ENCODE measurements at regions of chr16 and their contacts with region 1.

Region 1: DNA sequence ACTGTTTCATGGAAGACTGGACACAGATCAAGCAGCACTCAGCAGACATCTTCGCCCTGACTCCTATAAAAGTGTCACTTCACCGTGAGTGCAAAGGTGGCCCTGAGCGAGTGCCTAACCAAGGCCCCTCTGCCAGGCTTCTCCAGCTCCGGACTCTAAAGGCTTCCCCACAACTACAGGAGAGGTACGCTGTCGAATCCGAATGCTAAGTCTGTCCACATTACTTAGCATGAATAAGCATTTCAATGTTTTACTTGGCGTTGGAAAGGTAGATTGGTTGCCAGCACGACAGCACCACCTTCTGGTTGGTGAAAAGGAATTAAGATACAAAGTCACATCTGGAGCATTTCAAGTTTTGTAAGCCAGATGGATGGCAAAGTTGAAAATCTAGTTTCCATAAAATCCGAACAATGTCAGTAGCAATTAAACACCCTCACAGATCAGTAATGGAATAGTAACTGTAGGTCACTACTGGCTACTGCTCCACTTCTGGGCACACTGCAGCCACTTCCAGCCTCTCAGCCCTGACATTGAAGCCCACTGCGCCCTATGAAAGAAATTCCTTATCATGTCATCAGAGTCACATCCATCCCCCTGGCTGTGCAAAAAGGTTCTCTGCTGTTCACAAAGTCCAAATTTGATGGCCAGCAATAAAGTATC is 100.9 kb downstream of the PARN start:
- DNase-seq: peak; percentile 81
- ATAC-seq: peak; percentile 91
- H3K4me3 ChIP-seq: no peak overlapping the region
- H3K27ac ChIP-seq: peak overlapping the region; percentile 45
- H3K4me1 ChIP-seq: peaks cover 9% of the 10 kb centered on the region; the same call in 1 of the 2 replicates
- H3K27me3 ChIP-seq: no peaks in the 10 kb centered on the region
- CTCF ChIP-seq: peak; percentile 66 to 94 (median 70); a peak in 5 of 6 replicates
- EP300 ChIP-seq: no peak
- POLR2A ChIP-seq: no peak
- RAD21 ChIP-seq: peak; percentile 99

Region 2: GRCh38 chr16:14249291-14250032 is 279.7 kb before region 1 on chr16:
- CTCF ChIA-PET with region 1: interaction called, 19 read pairs
- POLR2A ChIA-PET with region 1: no interaction called
- RAD21 ChIA-PET with region 1: interaction called, 6 read pairs
- SMC1A ChIA-PET with region 1: interaction called, 12 read pairs
- in situ Hi-C with region 1: no loop called
- intact Hi-C with region 1: loop called (anchors 2 kb)
- DNase-seq: peak; percentile 13
- ATAC-seq: peak; percentile 57; the same call in 2 of the 3 replicates
- H3K4me3 ChIP-seq: no peak overlapping the region
- H3K27ac ChIP-seq: no peak overlapping the region
- H3K4me1 ChIP-seq: no peaks in the 10 kb centered on the region
- H3K27me3 ChIP-seq: no peaks in the 10 kb centered on the region
- CTCF ChIP-seq: peak; percentile 85 to 91 (median 88)
- EP300 ChIP-seq: no peak
- POLR2A ChIP-seq: no peak
- RAD21 ChIP-seq: peak; percentile 88

Region 3: GRCh38 chr16:14285513-14286385 is 243.4 kb before region 1 on chr16:
- CTCF ChIA-PET with region 1: interaction called, 17 read pairs
- POLR2A ChIA-PET with region 1: no interaction called
- RAD21 ChIA-PET with region 1: interaction called, 7 read pairs
- SMC1A ChIA-PET with region 1: interaction called, 14 read pairs
- in situ Hi-C with region 1: loop called (anchors 5 kb)
- intact Hi-C with region 1: loop called (anchors 1 kb)
- DNase-seq: peak; percentile 87
- ATAC-seq: peak; percentile 89
- H3K4me3 ChIP-seq: peak overlapping the region; percentile 89
- H3K27ac ChIP-seq: peak overlapping the region; percentile 76
- H3K4me1 ChIP-seq: peaks cover 8% of the 10 kb centered on the region
- H3K27me3 ChIP-seq: no peaks in the 10 kb centered on the region
- CTCF ChIP-seq: no peak
- EP300 ChIP-seq: peak; percentile 10 to 49; a peak in 1 of 4 replicates
- POLR2A ChIP-seq: no peak
- RAD21 ChIP-seq: no peak

Region 4: GRCh38 chr16:14310519-14310991 is 218.6 kb before region 1 on chr16:
- CTCF ChIA-PET with region 1: interaction called, 13 read pairs
- POLR2A ChIA-PET with region 1: no interaction called
- RAD21 ChIA-PET with region 1: interaction called, 12 read pairs
- SMC1A ChIA-PET with region 1: interaction called, 28 read pairs
- in situ Hi-C with region 1: no loop called
- intact Hi-C with region 1: no loop called
- DNase-seq: peak; percentile 86
- ATAC-seq: peak; percentile 76
- H3K4me3 ChIP-seq: peak overlapping the region; percentile 91; the same call in 1 of the 2 replicates
- H3K27ac ChIP-seq: peak overlapping the region; percentile 92
- H3K4me1 ChIP-seq: peaks cover 54% of the 10 kb centered on the region
- H3K27me3 ChIP-seq: no peaks in the 10 kb centered on the region
- CTCF ChIP-seq: peak; percentile 35 to 60 (median 43); a peak in 5 of 6 replicates
- EP300 ChIP-seq: peak; percentile 82 to 97
- POLR2A ChIP-seq: 0 out of 2 replicates have a peak, but pooled peaks have one; percentile 27
- RAD21 ChIP-seq: peak; percentile 13; the same call in 1 of the 2 replicates

Region 5: DNA sequence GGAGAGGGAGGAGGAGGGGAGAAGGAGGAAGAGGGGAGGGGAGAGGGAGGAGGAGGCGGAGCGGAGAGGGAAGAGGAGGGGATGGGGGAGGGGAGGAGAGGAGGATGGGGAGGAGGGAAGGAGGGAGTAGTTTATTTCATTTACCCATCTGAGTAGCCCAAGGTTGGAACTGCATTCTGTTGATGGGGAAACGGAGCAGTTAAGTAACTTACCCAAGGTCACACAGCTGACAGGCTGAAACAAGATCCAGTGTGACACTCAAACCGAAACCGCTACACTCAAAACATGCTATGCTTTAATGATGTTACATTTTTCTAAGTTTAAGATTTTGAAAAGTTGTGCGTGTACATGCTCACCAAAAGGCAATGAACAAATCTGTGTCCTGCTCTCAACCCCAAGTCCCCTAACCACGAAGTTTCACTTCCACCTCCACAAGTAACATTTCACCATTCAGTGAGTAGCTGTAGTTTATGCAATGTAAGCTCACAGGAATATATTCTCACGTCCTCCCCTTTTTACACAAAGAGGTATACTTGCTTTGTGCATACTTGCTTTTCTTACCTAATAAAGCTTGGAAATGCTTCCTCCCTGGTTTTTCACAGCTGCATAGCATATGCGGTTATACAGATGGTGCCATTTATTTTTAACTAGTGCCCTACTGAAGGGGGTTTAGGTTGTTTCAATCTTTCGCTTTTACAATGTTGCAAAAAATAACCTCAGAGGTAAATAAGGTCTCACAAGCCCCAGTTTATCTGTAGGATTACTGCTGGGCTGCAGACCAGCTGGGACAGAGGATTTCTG is 174.4 kb before region 1 on chr16:
- CTCF ChIA-PET with region 1: no interaction called
- POLR2A ChIA-PET with region 1: no interaction called
- RAD21 ChIA-PET with region 1: interaction called, 4 read pairs
- SMC1A ChIA-PET with region 1: interaction called, 8 read pairs
- in situ Hi-C with region 1: no loop called
- intact Hi-C with region 1: loop called (anchors 2 kb)
- DNase-seq: peak; percentile 100
- ATAC-seq: peak; percentile 92
- H3K4me3 ChIP-seq: no peak overlapping the region
- H3K27ac ChIP-seq: peak overlapping the region; percentile 98
- H3K4me1 ChIP-seq: peaks cover 39% of the 10 kb centered on the region
- H3K27me3 ChIP-seq: no peaks in the 10 kb centered on the region
- CTCF ChIP-seq: no peak
- EP300 ChIP-seq: peak; percentile 98 to 99
- POLR2A ChIP-seq: no peak
- RAD21 ChIP-seq: no peak

Region 6: DNA sequence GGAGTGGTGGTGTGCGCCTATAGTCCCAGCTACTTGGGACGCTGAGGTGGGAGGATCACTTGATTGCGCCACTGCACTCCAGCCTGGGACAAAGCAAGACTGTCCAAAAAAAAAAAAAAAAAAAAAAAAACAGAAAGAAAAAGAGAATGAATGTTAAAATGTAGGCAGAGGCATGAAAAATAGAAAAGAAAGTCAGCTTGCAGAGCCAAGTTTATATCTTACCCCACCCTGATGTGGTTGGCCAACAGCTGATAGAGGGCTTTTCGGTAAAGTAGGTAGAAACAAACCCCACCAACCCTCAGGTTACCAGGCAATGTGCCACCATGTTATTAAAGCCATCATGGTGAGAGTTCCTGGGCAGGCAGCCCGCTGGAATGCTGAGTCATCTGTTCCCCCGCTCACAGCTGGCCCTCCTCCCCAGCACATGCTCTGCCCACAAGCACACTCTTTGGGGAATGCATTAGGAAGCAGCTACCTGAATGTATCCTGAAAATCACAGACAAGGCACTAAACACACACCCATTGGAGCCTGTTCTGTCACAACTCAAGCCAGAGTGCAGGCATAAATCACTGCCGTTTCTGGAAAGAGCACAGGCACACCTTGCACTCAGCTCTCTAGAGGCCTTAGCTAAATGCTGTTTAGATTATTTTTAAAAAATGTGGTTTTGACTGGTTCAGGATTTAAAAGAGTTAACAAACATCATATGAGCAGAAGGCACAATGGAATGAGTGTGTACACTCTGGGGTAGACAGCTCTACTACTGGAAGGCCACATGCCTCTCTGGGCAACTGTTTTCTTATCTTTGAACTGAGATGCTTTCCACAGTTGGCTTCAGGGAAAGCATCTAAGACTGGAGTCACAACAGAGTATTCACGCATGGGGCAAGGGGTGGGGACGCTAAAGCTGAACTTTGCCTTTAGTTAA is 27.5 kb before region 1 on chr16:
- CTCF ChIA-PET with region 1: interaction called, 24 read pairs
- POLR2A ChIA-PET with region 1: no interaction called
- RAD21 ChIA-PET with region 1: interaction called, 6 read pairs
- SMC1A ChIA-PET with region 1: interaction called, 11 read pairs
- in situ Hi-C with region 1: no loop called
- intact Hi-C with region 1: no loop called
- DNase-seq: peak; percentile 50
- ATAC-seq: peak; percentile 35
- H3K4me3 ChIP-seq: no peak overlapping the region
- H3K27ac ChIP-seq: peak overlapping the region; percentile 75
- H3K4me1 ChIP-seq: peaks cover 61% of the 10 kb centered on the region
- H3K27me3 ChIP-seq: no peaks in the 10 kb centered on the region
- CTCF ChIP-seq: no peak
- EP300 ChIP-seq: no peak; a peak in 1 of 4 replicates
- POLR2A ChIP-seq: no peak
- RAD21 ChIP-seq: no peak

Region 7: GRCh38 chr16:14510939-14511799 is 18.0 kb before region 1 on chr16:
- CTCF ChIA-PET with region 1: interaction called, 8 read pairs
- POLR2A ChIA-PET with region 1: no interaction called
- RAD21 ChIA-PET with region 1: interaction called, 3 read pairs
- SMC1A ChIA-PET with region 1: interaction called, 19 read pairs
- in situ Hi-C with region 1: no loop called
- intact Hi-C with region 1: no loop called
- DNase-seq: no peak
- ATAC-seq: no peak
- H3K4me3 ChIP-seq: no peak overlapping the region
- H3K27ac ChIP-seq: no peak overlapping the region
- H3K4me1 ChIP-seq: no peaks in the 10 kb centered on the region
- H3K27me3 ChIP-seq: no peaks in the 10 kb centered on the region
- CTCF ChIP-seq: no peak
- EP300 ChIP-seq: no peak
- POLR2A ChIP-seq: no peak
- RAD21 ChIP-seq: no peak

Region 8: GRCh38 chr16:14616280-14616679 is 87.1 kb after region 1 on chr16:
- CTCF ChIA-PET with region 1: no interaction called
- POLR2A ChIA-PET with region 1: no interaction called
- RAD21 ChIA-PET with region 1: no interaction called
- SMC1A ChIA-PET with region 1: no interaction called
- in situ Hi-C with region 1: no loop called
- intact Hi-C with region 1: no loop called
- DNase-seq: no peak
- ATAC-seq: no peak
- H3K4me3 ChIP-seq: no peak overlapping the region
- H3K27ac ChIP-seq: no peak overlapping the region
- H3K4me1 ChIP-seq: no peaks in the 10 kb centered on the region
- H3K27me3 ChIP-seq: no peaks in the 10 kb centered on the region
- CTCF ChIP-seq: no peak
- EP300 ChIP-seq: no peak
- POLR2A ChIP-seq: no peak
- RAD21 ChIP-seq: no peak